ENCODE measurements at regions of chr11 and their contacts with region 1.

Region 1: DNA sequence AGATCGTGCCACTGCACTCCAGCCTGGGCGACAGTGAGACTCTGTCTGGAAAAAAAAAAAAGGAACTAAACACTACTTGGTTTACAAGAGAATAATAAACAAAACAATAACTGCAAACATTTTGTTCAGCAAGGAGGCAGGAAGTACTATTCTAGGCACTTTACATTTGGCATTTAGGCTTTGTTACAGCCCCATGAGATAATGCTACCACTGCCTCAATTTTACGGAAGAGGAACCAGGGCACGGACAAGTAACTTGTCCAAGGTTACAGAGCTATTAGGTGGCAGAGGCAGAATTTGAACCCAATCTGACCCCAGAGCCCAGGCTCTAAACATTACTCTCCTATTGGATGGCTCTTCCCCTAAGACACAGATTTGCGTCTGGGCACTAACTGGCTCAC is 108.7 kb upstream of the AKIP1 start:
- DNase-seq: no peak
- H3K4me3 Mint-ChIP-seq: no peak overlapping the region
- H3K27ac Mint-ChIP-seq: no peak overlapping the region
- H3K4me1 Mint-ChIP-seq: no peaks in the 10 kb centered on the region
- H3K27me3 Mint-ChIP-seq: peaks cover 5% of the 10 kb centered on the region

Region 2: DNA sequence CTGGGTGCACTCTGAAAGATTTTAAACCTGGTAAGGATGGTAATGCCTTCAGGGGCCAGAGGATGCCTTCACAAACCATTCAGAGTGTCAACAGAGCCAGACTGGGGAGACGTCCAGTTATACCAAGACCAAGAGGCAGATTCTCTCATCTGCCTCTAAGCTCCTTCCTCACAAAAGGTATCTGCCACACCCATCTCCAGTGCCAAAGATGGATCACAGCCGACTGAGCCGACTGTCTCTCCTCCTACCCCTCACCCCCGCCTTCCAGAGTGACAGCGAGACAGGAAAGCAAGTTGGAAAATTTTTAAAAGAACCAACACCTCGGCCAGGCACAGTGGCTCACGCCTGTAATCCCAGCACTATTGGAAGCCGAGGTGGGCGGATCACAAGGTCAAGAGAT is 29.6 kb after region 1 on chr11:
- intact Hi-C with region 1: loop called (anchors 1 kb)
- DNase-seq: no peak
- H3K4me3 Mint-ChIP-seq: no peak overlapping the region
- H3K27ac Mint-ChIP-seq: no peak overlapping the region
- H3K4me1 Mint-ChIP-seq: peaks cover 14% of the 10 kb centered on the region
- H3K27me3 Mint-ChIP-seq: no peaks in the 10 kb centered on the region

Measured in activated T-helper 1 cell treated with anti-CD3 and anti-CD28 coated beads, Interleukin-12 subunit alpha, Interleukin-12 subunit beta, Interleukin-2, Interleukin-4 antibody, amounts not matched to agents 30 ng/mL and 10 ng/mL and 1 ng/mL, durations not matched to agents 14 hours and 24 hours and 36 hours (primary cell).